Right ventricle myocardium inferior (tissue), 1 donor: ENCODE measurements at regions of chr17 and their contacts with region 1.

Region 1: DNA sequence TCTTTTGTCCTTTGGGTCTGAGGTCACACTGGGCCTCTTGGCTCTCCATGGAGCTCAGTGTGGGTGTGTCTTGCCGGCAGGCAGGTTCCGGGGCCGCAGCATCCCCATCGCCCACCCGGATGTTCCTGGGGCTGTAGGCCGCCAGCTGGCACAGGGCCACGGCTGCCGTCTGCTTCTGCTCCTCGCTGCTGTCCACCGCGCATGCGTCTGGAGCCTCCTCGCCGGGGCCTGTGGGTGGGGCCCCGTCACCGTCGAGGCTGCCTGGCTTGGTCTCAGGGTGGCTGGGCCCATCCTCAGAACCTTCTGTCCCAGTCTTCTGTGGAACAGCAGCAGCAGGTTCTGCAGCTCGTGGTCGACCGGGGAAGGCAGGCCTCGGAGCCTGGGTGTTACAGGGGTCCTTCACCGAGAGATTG is 9.6 kb downstream of the ZNF750 start:
- DNase-seq: peak; percentile 91
- ATAC-seq: peak; percentile 72

Region 2: DNA sequence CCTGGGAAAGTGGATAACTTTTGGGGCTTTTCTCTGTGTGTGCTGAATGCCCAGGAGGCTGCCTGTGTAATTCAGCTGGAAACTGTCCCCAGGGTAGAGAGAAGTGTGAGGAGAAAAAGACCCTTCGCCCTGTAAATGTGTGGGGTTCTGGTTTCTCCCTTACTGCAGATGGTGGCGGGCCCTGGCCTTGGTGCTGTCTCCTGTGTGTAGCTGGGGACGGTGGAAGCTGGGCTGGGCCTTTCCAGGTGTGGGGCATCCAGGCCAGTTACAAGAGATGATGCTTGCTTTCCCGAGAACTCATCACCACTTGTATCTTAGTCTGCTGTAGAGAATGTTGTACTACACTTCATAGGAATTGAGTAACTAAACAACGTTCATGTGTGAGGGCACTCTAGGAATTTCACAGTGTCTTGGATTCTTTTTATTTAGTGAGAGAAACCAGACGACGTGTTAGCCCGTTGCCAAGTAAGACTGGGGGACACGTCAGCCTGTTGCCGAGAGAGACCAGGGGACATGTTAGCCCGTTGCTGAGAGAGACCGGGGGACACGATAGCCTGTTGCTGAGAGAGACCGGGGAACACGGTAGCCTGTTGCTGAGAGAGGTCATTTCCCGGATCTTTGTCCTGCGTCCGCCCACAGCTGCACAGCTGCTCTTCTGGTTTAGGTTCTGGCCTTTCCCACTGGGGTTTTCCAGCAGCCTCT is 35.3 kb before region 1 on chr17:
- intact Hi-C with region 1: loop called (anchors 5 kb)
- DNase-seq: peak; percentile 67
- ATAC-seq: peak; percentile 64

Region 3: GRCh38 chr17:82807101-82807500 is 23.2 kb before region 1 on chr17:
- intact Hi-C with region 1: loop called (anchors 2 kb)
- DNase-seq: peak; percentile 20
- ATAC-seq: no peak